ENCODE measurements at regions of chr20 and their contacts with region 1.

Region 1: GRCh38 chr20:57654363-57654997 is 34.3 kb upstream of the ZBP1 start:
- DNase-seq: peak; percentile 43
- ATAC-seq: peak; percentile 69

Region 2: GRCh38 chr20:57736738-57737364 is 82.4 kb after region 1 on chr20:
- intact Hi-C with region 1: no loop called
- DNase-seq: no peak
- ATAC-seq: no peak

Region 3: DNA sequence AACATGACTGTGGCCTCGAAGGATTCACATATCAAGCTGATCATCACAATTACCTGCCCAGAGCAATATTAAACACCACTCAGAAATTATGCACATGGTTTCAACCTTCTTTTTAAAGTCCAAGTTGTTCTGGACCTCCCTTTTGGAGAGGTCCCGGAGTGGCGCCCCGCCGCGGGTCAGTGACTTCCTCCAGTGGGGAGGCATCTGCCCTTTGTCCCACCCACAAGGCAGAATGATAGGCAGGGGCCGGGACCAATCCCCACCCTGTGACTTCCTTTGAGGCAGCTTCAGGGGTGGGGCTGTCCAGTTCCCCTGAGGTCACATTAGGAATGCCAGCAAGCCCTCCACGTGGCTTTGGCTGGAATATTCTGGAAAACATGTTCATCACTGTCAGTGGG is 367.0 kb after region 1 on chr20:
- intact Hi-C with region 1: loop called (anchors 2 kb)
- DNase-seq: peak; percentile 70
- ATAC-seq: no peak

Region 4: GRCh38 chr20:58087193-58087858 is 432.8 kb after region 1 on chr20:
- intact Hi-C with region 1: loop called (anchors 1 kb)
- DNase-seq: no peak
- ATAC-seq: no peak

Region 5: GRCh38 chr20:58179432-58180099 is 525.1 kb after region 1 on chr20:
- intact Hi-C with region 1: loop called (anchors 1 kb)
- DNase-seq: peak; percentile 77
- ATAC-seq: peak; percentile 74